HCT116 (cell line): ENCODE measurements at regions of chr9 and their contacts with region 1.

Region 1: GRCh38 chr9:72022841-72023240 is 37.6 kb downstream of the C9orf57 start:
- DNase-seq: no peak
- ATAC-seq: no peak
- H3K4me3 ChIP-seq: no peak overlapping the region
- H3K27ac ChIP-seq: no peak overlapping the region
- H3K4me1 ChIP-seq: peaks cover 0 to 3% of the 10 kb centered on the region in 2 experiments; a peak in 1 of 4 replicates
- H3K27me3 ChIP-seq: no peaks in the 10 kb centered on the region
- CTCF ChIP-seq: no peak
- POLR2A ChIP-seq: no peak
- RAD21 ChIP-seq: no peak

Region 2: GRCh38 chr9:70639853-70640814 is 1382.7 kb before region 1 on chr9:
- CTCF ChIA-PET with region 1: interaction called, 11 read pairs
- POLR2A ChIA-PET with region 1: no interaction called
- RAD21 ChIA-PET with region 1: no interaction called
- intact Hi-C with region 1: loop called (anchors 5 kb)
- DNase-seq: peak; percentile 22
- ATAC-seq: peak; percentile 83
- H3K4me3 ChIP-seq: no peak overlapping the region
- H3K27ac ChIP-seq: no peak overlapping the region
- H3K4me1 ChIP-seq: no peaks in the 10 kb centered on the region
- H3K27me3 ChIP-seq: peaks cover 15% of the 10 kb centered on the region
- CTCF ChIP-seq: peak; percentile 55 to 74 (median 68)
- POLR2A ChIP-seq: no peak
- RAD21 ChIP-seq: peak; percentile 80

Region 3: GRCh38 chr9:71604197-71605063 is 418.4 kb before region 1 on chr9:
- CTCF ChIA-PET with region 1: interaction called, 3 read pairs
- POLR2A ChIA-PET with region 1: no interaction called
- RAD21 ChIA-PET with region 1: no interaction called
- intact Hi-C with region 1: loop called (anchors 2 kb)
- DNase-seq: peak; percentile 37
- ATAC-seq: peak; percentile 94
- H3K4me3 ChIP-seq: no peak overlapping the region
- H3K27ac ChIP-seq: no peak overlapping the region
- H3K4me1 ChIP-seq: no peaks in the 10 kb centered on the region
- H3K27me3 ChIP-seq: no peaks in the 10 kb centered on the region
- CTCF ChIP-seq: peak; percentile 81 to 83 (median 82)
- POLR2A ChIP-seq: no peak
- RAD21 ChIP-seq: peak; percentile 81

Region 4: GRCh38 chr9:71819115-71819739 is 203.6 kb before region 1 on chr9:
- CTCF ChIA-PET with region 1: interaction called, 10 read pairs
- POLR2A ChIA-PET with region 1: no interaction called
- RAD21 ChIA-PET with region 1: no interaction called
- intact Hi-C with region 1: no loop called
- DNase-seq: peak; percentile 10
- ATAC-seq: no peak
- H3K4me3 ChIP-seq: no peak overlapping the region
- H3K27ac ChIP-seq: no peak overlapping the region
- H3K4me1 ChIP-seq: no peaks in the 10 kb centered on the region
- H3K27me3 ChIP-seq: no peaks in the 10 kb centered on the region
- CTCF ChIP-seq: peak; percentile 55 to 81 (median 68); a peak in 5 of 6 replicates
- POLR2A ChIP-seq: no peak
- RAD21 ChIP-seq: peak; percentile 62

Region 5: GRCh38 chr9:72038890-72039410 is 16.1 kb after region 1 on chr9:
- CTCF ChIA-PET with region 1: interaction called, 18 read pairs
- POLR2A ChIA-PET with region 1: no interaction called
- RAD21 ChIA-PET with region 1: no interaction called
- intact Hi-C with region 1: no loop called
- DNase-seq: peak; percentile 83
- ATAC-seq: peak; percentile 96
- H3K4me3 ChIP-seq: no peak overlapping the region
- H3K27ac ChIP-seq: no peak overlapping the region
- H3K4me1 ChIP-seq: peaks cover 0 to 12% of the 10 kb centered on the region in 2 experiments; a peak in 2 of 4 replicates
- H3K27me3 ChIP-seq: no peaks in the 10 kb centered on the region
- CTCF ChIP-seq: peak; percentile 87 to 94 (median 88)
- POLR2A ChIP-seq: no peak
- RAD21 ChIP-seq: peak; percentile 99